Heart right ventricle (tissue), 16 donors: ENCODE measurements at regions of chr9 and their contacts with region 1.

Region 1: DNA sequence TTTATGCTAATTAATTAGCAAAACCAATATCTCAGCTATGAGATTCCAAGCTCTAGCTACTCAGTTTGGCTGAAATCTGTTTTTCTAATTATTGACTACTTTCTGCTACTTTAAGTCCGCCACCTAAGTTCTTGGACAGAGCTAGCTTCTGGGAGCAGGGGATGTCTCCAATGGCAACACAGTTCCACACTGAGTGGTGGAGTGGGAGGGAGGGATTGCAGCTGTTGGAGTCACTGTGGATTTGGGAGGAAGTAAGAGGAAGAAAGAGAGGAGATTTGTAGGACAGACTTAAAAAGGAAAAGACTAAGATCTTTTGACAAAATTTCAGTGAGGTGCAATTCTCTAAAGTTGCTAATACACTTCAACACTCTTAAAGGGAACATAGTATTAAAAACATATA is 450.8 kb downstream of the NFIB start:
- DNase-seq: peak; percentile 18 to 84
- ATAC-seq: peak; percentile 89 to 98 (median 95)
- H3K4me3 ChIP-seq: no peak overlapping the region
- H3K27ac ChIP-seq: peak overlapping the region in 9 of 10 donors; percentile 19 to 57 (median 39)
- H3K4me1 ChIP-seq: peaks cover 3 to 47% (median 33%) of the 10 kb centered on the region in 9 donors
- H3K27me3 ChIP-seq: no peaks in the 10 kb centered on the region
- CTCF ChIP-seq: no peak

Region 2: GRCh38 chr9:13705918-13706317 is 157.2 kb before region 1 on chr9:
- intact Hi-C with region 1: loop called in 1 of 10 experiments (anchors 5 kb)
- DNase-seq: peak in 1 of 2 donors; percentile 55
- ATAC-seq: peak; percentile 85 to 96 (median 91)
- H3K4me3 ChIP-seq: no peak overlapping the region
- H3K27ac ChIP-seq: peak overlapping the region in 8 of 10 donors; percentile 13 to 65 (median 50)
- H3K4me1 ChIP-seq: peaks cover 0 to 29% (median 18%) of the 10 kb centered on the region in 9 donors
- H3K27me3 ChIP-seq: no peaks in the 10 kb centered on the region
- CTCF ChIP-seq: no peak